Activated B cell treated with CpG ODN at 0.5 μM for 24 hours (primary cell): ENCODE measurements at regions of chr4 and their contacts with region 1.

Region 1: GRCh38 chr4:102007959-102008425 is 217.5 kb downstream of the BANK1 start:
- DNase-seq: no peak
- ATAC-seq: peak; percentile 92
- H3K4me3 Mint-ChIP-seq: peak overlapping the region; percentile 38
- H3K27ac Mint-ChIP-seq: peak overlapping the region; percentile 57
- H3K4me1 Mint-ChIP-seq: peaks cover 59% of the 10 kb centered on the region
- H3K27me3 Mint-ChIP-seq: no peaks in the 10 kb centered on the region
- CTCF ChIP-seq: no peak

Region 2: GRCh38 chr4:101993002-101993841 is 14.8 kb before region 1 on chr4:
- CTCF ChIA-PET with region 1: no interaction called
- POLR2A ChIA-PET with region 1: interaction called, 7 read pairs
- intact Hi-C with region 1: loop called (anchors 1 kb)
- DNase-seq: no peak
- ATAC-seq: peak; percentile 49
- H3K4me3 Mint-ChIP-seq: peak overlapping the region; percentile 52
- H3K27ac Mint-ChIP-seq: peak overlapping the region; percentile 86
- H3K4me1 Mint-ChIP-seq: peaks cover 94% of the 10 kb centered on the region
- H3K27me3 Mint-ChIP-seq: no peaks in the 10 kb centered on the region
- CTCF ChIP-seq: no peak

Region 3: GRCh38 chr4:102022343-102022742 is 14.4 kb after region 1 on chr4:
- CTCF ChIA-PET with region 1: no interaction called
- POLR2A ChIA-PET with region 1: no interaction called
- intact Hi-C with region 1: no loop called
- DNase-seq: no peak
- ATAC-seq: no peak
- H3K4me3 Mint-ChIP-seq: no peak overlapping the region
- H3K27ac Mint-ChIP-seq: peak overlapping the region; percentile 6
- H3K4me1 Mint-ChIP-seq: peaks cover 1% of the 10 kb centered on the region
- H3K27me3 Mint-ChIP-seq: no peaks in the 10 kb centered on the region
- CTCF ChIP-seq: no peak

Region 4: DNA sequence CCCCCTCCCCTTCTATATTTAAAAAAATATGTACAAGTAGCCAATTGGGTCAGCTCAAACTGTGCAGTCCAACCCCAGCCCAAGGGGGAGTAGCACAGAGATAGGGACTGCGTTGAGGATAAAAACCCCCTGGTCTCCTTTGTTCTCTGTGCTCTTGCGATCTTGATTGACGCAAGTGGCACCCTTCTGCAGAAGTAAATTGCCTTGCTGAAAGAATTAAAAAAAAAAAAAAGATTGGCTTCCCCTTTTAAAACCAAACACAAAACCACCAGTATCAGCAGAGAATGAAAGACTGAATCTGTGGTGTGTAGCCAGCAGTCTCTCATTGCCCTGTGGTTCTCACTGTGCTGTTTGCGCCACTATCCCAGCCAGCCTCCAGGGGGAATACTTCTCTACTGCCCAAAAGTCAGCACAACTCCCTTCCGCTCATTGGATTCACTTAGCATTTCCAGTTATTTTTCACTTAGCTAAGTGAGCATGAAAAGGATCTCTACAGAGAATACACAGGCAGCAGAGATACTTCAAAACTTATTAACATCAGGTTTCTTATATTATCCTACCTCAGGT is 723.1 kb after region 1 on chr4:
- CTCF ChIA-PET with region 1: no interaction called
- POLR2A ChIA-PET with region 1: no interaction called
- intact Hi-C with region 1: no loop called
- DNase-seq: no peak
- ATAC-seq: no peak
- H3K4me3 Mint-ChIP-seq: no peak overlapping the region
- H3K27ac Mint-ChIP-seq: no peak overlapping the region
- H3K4me1 Mint-ChIP-seq: peaks cover 24% of the 10 kb centered on the region
- H3K27me3 Mint-ChIP-seq: no peaks in the 10 kb centered on the region
- CTCF ChIP-seq: no peak